Spleen (tissue), 13 donors: ENCODE measurements at regions of chr4 and their contacts with region 1.

Region 1: GRCh38 chr4:45186249-45186648 is 459.9 kb upstream of the GNPDA2 start:
- DNase-seq: no peak
- H3K4me3 ChIP-seq: no peak overlapping the region
- H3K27ac ChIP-seq: no peak overlapping the region
- H3K4me1 ChIP-seq: no peaks in the 10 kb centered on the region
- H3K27me3 ChIP-seq: no peaks in the 10 kb centered on the region
- CTCF ChIP-seq: no peak
- POLR2A ChIP-seq: no peak

Region 2: GRCh38 chr4:44978020-44978419 is 208.2 kb before region 1 on chr4:
- intact Hi-C with region 1: loop called (anchors 5 kb)
- DNase-seq: no peak
- H3K4me3 ChIP-seq: no peak overlapping the region
- H3K27ac ChIP-seq: no peak overlapping the region
- H3K4me1 ChIP-seq: no peaks in the 10 kb centered on the region
- H3K27me3 ChIP-seq: no peaks in the 10 kb centered on the region
- CTCF ChIP-seq: no peak
- POLR2A ChIP-seq: no peak